ENCODE measurements at regions of chr5 and their contacts with region 1.

Region 1: DNA sequence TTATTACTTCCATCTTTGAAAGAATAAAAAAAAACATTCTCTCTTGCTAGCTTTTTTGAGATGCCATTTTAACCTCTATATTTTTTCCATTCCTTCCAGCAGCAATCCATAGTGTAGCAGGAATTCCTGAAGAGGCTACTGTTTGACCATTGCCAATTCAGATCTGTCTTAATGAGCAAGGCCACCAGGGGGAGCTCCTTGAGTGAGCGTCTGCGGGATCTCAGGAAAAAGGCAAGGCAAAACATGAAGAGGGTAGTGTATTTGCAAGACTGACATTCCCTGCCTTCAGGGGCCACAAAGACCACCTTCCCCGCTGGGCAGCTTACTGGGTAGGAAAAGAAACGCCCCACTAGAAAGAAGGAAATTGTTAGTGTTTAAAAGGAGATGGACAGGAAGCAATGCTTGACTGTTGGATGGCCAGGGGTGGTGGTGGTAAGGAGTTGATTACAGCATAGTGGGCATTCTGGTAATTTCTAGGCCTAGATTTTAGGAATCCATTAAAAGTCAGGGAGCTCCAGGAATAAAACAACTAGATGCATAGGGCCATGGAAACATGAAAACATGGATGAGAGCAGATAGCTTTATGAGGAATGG is 206.6 kb upstream of the HAPLN1 start:
- DNase-seq: no peak
- H3K4me3 Mint-ChIP-seq: no peak overlapping the region
- H3K27ac Mint-ChIP-seq: no peak overlapping the region
- H3K4me1 Mint-ChIP-seq: no peaks in the 10 kb centered on the region
- H3K27me3 Mint-ChIP-seq: no peaks in the 10 kb centered on the region

Region 2: DNA sequence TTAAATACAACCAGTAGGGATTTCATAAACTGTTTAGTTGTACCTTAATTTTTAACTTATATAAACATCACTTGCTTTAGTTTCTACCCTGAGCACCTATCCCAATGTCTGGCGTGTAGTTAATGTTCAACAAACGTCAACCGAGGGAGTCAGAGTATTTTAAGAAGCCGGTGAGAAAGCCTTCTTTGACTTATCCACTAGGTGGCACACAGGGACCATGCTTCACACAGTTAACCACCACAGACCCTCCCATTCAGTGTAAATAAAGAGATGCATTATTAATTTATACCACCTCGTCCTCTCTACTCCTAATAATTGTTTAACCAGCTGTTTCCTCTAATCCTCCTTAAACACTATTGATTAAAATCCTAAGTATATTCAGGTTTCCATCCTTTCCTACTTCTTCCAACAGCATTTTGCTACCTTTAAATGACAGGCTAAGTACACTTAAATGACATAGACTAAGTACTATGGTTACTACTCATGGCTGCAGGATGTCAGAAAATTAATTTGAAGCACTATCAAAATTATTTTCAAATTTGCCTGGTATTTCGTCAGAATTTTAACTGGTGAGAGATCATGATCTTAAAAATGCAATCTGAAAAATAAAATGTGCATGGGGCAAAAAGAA is 208.9 kb before region 1 on chr5:
- intact Hi-C with region 1: loop called (anchors 10 kb)
- DNase-seq: no peak
- H3K4me3 Mint-ChIP-seq: no peak overlapping the region
- H3K27ac Mint-ChIP-seq: no peak overlapping the region
- H3K4me1 Mint-ChIP-seq: no peaks in the 10 kb centered on the region
- H3K27me3 Mint-ChIP-seq: peaks cover 49% of the 10 kb centered on the region

Region 3: GRCh38 chr5:83911367-83911919 is 15.8 kb before region 1 on chr5:
- intact Hi-C with region 1: no loop called
- DNase-seq: no peak
- H3K4me3 Mint-ChIP-seq: no peak overlapping the region
- H3K27ac Mint-ChIP-seq: no peak overlapping the region
- H3K4me1 Mint-ChIP-seq: no peaks in the 10 kb centered on the region
- H3K27me3 Mint-ChIP-seq: no peaks in the 10 kb centered on the region

Measured in activated T-helper 1 cell treated with anti-CD3 and anti-CD28 coated beads, Interleukin-12 subunit alpha, Interleukin-12 subunit beta, Interleukin-2, Interleukin-4 antibody, amounts not matched to agents 30 ng/mL and 10 ng/mL and 1 ng/mL, durations not matched to agents 14 hours and 24 hours and 36 hours (primary cell).